ENCODE measurements at regions of chr17 and their contacts with region 1.

Region 1: GRCh38 chr17:27236717-27237315 is 57.1 kb upstream of the WSB1 start:
- H3K4me3 ChIP-seq: no peak overlapping the region
- H3K27ac ChIP-seq: no peak overlapping the region
- H3K4me1 ChIP-seq: peaks cover 2% of the 10 kb centered on the region; the same call in 1 of the 2 replicates
- CTCF ChIP-seq: peak; percentile 47; the same call in 1 of the 2 replicates

Region 2: GRCh38 chr17:27206447-27206846 is 30.4 kb before region 1 on chr17:
- CTCF ChIA-PET with region 1: interaction called, 22 read pairs
- POLR2A ChIA-PET with region 1: no interaction called
- H3K4me3 ChIP-seq: no peak overlapping the region
- H3K27ac ChIP-seq: no peak overlapping the region
- H3K4me1 ChIP-seq: no peaks in the 10 kb centered on the region
- CTCF ChIP-seq: no peak

Region 3: DNA sequence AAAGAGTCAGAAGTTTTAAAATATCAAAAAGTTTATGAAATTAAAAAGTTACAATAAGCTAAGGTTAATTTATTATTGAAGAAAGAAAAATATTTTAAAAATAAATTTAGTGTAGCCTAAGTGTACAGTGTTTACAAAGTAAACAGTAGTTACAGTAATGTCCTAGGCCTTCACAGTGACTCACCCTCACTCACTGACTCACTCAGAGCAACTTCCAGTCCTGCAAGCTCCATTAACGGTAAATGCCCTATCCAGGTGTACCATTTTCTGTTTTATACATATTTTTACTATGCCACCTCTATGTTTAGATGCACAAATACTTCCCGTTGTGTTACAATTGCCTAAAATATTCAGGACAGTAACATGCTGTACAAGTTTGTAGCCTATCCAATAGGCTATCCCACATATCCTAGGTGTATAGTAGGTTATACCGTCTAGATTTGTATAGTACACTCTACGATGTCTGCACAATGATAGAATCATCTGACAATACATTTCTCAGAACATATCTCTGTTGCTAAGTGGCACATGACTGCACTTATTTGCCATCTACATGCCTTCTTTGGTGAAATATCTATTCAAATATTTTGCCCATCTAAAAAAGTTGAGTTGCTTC is 10.1 kb before region 1 on chr17:
- CTCF ChIA-PET with region 1: interaction called, 32 read pairs
- POLR2A ChIA-PET with region 1: no interaction called
- H3K4me3 ChIP-seq: no peak overlapping the region
- H3K27ac ChIP-seq: no peak overlapping the region
- H3K4me1 ChIP-seq: no peaks in the 10 kb centered on the region
- CTCF ChIP-seq: no peak

Region 4: DNA sequence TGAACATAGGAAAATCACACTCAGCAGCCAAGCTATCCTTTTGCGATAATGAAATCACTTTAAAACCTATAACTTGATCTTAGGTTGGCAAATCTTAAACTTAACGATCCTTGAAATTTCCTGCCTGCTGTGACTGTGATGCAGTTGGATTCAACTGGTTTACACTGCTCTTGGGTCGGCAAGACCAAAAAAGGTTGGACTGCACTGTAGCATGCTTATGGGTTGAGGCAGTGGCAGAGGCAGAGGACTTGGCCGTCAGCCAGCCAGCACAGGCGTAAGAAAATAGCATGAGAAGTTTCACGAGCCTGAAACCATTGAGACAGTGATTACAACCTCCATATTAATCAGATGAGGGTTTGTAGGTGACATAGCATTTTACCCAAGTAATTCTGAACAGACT is 78.5 kb after region 1 on chr17:
- CTCF ChIA-PET with region 1: interaction called, 17 read pairs
- POLR2A ChIA-PET with region 1: no interaction called
- H3K4me3 ChIP-seq: no peak overlapping the region
- H3K27ac ChIP-seq: peak overlapping the region; percentile 66
- H3K4me1 ChIP-seq: peaks cover 13% of the 10 kb centered on the region
- CTCF ChIP-seq: no peak

Region 5: DNA sequence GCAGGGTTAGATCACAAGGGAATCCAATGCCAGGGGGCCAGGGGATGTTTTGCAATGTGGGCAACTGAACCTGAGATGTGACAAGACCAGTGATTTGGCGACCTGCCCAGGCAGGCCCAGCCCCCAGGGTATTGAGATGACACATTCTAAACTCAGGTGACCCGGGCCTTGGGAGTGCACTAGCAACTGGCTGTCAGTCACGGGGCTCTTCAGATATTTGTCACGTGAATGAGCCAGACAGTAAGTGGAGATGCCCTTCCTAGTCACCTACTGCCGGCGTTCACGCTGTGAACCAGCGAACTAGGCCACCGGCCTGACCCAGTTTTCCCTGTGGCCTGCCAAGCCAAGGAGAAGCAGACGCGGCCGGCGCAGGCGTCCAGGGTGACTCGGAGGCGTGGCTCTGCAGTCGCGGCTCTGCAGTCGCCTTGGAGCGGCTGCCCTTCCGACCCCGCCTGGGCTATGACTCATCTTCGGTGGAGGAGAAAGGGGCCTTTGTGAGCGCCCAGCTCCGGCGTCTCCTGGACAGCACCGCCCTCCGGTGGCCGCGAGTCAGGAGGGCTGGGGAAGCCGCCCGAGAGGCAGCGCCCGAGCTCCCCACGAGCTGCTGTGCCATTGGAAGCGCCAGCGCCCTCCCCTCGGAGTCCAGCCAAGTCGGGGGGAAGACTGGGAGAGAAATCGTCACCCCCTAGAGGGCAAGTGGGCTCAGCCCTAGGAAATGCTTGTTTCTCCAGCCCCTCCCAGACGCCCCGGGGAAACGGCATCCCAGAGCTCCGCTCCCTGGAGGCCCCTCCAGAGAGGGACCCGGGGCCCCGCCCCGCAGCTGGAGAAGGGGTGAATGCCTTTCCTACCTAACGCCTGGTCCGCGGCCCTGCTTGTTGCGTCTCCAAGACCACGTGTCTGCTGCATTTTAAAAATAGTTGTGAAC is 95.9 kb after region 1 on chr17:
- CTCF ChIA-PET with region 1: interaction called, 100 read pairs
- POLR2A ChIA-PET with region 1: interaction called, 8 read pairs
- H3K4me3 ChIP-seq: peak overlapping the region; percentile 48
- H3K27ac ChIP-seq: peak overlapping the region; percentile 84
- H3K4me1 ChIP-seq: peaks cover 2% of the 10 kb centered on the region; the same call in 1 of the 2 replicates
- CTCF ChIP-seq: peak; percentile 99

Region 6: DNA sequence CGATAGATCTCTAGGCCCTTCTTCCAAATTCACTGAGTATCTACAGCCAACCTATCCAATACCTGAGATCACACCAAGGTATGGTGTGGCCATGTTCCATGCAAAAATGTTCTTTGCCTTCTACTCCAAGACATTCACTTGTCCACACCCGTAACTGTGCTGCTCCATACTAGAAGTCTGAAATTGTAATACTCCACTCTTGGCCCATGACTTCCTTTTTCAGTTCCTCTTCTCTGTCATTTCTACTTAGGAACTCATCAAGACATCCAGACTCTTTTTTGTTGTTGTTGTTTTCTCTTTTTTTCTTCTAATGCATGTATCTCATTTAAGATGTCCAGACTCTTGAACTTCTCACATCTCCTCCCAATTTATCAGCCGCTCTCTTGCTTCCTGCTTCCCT is 177.0 kb after region 1 on chr17:
- CTCF ChIA-PET with region 1: interaction called, 11 read pairs
- POLR2A ChIA-PET with region 1: no interaction called
- H3K4me3 ChIP-seq: no peak overlapping the region
- H3K27ac ChIP-seq: no peak overlapping the region
- H3K4me1 ChIP-seq: no peaks in the 10 kb centered on the region
- CTCF ChIP-seq: no peak

Region 7: DNA sequence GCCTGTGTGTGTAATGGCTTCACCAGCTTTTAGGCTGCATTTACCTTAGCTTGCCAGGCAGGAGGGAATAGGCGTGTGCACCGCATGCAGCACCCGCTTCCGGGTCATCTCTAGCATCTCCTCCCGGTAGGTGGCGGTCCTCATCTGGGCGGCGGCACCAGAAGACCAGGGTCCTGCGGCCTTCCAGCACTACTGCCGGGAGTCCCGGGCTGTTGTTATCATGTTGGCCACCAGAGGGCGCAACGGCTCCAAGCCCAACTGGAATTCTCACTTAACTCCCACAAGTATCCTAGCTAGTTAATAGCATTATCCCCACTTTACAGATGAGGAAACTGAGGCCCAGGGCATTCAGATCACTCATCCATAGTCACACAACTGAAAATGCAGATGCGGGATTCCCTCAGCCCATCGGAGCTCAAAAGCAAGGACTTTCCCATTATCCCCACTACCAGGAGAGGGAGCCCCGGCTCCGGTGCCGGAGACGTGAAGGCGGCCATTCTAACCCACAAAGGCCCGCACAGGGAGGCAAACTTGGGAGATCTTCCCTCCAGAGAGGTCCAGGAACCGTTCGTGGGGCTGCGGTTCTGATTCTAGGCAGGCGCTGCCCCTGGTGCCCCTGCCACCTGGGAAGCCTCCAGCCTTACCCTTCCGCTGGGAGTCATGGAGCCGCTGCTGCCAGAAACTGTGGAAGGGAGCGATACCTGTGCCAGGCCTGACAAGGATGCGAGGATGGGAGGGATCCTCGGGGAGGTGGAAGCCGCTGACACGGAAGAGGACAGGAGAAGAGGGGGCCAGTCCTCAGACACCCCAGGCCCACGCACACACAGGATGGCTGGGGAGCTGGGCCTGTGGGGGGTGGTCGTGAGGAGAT is 418.1 kb after region 1 on chr17:
- CTCF ChIA-PET with region 1: interaction called, 47 read pairs
- POLR2A ChIA-PET with region 1: no interaction called
- H3K4me3 ChIP-seq: no peak overlapping the region
- H3K27ac ChIP-seq: no peak overlapping the region
- H3K4me1 ChIP-seq: no peaks in the 10 kb centered on the region
- CTCF ChIP-seq: peak; percentile 96